Activated T-helper 1 cell treated with anti-CD3 and anti-CD28 coated beads, Interleukin-12 subunit alpha, Interleukin-12 subunit beta, Interleukin-2, Interleukin-4 antibody, amounts not matched to agents 30 ng/mL and 10 ng/mL and 1 ng/mL, durations not matched to agents 14 hours and 24 hours and 36 hours (primary cell): ENCODE measurements at regions of chr2 and their contacts with region 1.

Region 1: DNA sequence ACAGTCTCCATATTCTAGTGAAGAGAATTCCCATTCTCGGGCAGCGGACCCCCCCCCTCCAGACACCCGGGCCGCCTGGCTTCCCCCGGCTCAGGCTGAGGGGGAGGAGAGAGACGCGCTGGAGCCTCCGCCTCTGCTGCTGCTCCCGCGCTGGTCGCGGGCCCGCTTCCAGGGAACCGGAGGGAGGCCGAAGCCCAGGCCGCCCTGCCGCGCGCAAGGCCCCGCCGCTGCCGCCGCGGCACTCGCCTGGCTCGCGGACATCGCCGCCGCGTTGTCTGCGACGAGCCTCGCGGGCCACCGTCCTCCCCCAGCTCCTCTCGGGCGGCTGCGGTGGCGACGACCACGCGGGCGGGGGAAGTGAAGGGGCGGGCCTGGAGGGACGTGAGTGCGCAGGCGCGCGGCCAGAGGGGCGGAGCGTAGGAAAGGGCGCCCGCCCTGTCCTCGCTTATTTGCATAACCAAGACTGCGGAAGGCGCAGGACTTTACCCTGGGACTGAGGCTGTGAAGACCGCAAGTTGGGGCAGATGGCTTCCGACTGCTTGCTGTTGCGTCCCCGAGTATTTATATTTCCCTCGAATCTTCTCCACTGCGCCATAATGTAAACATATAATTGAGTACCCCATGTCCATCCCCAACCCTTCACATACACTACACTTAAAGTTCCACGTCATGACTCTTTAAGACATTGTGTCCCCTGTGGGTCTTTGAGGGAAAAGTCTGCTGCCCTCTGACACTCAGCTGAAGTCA is at the start of gene ARL5A:
- DNase-seq: peak; percentile 93
- H3K4me3 Mint-ChIP-seq: peak within 1 kb of the TSS; percentile 96
- H3K27ac Mint-ChIP-seq: peak within 1 kb of the TSS; percentile 90
- H3K4me1 Mint-ChIP-seq: peaks cover 40% of the 10 kb centered on the region
- H3K27me3 Mint-ChIP-seq: no peaks in the 10 kb centered on the region
- total RNA-seq, gene ARL5A: 60.1 and 69.3 TPM in 2 replicates

Region 2: GRCh38 chr2:151261231-151261976 is 566.9 kb before region 1 on chr2 and contains the start of gene RBM43:
- intact Hi-C with region 1: loop called (anchors 10 kb)
- DNase-seq: peak; percentile 85
- H3K4me3 Mint-ChIP-seq: peak within 1 kb of the TSS; percentile 93
- H3K27ac Mint-ChIP-seq: peak within 1 kb of the TSS; percentile 98
- H3K4me1 Mint-ChIP-seq: peaks cover 18% of the 10 kb centered on the region
- H3K27me3 Mint-ChIP-seq: peaks cover 2% of the 10 kb centered on the region
- total RNA-seq, gene RBM43: 1.9 and 2.9 TPM in 2 replicates

Region 3: DNA sequence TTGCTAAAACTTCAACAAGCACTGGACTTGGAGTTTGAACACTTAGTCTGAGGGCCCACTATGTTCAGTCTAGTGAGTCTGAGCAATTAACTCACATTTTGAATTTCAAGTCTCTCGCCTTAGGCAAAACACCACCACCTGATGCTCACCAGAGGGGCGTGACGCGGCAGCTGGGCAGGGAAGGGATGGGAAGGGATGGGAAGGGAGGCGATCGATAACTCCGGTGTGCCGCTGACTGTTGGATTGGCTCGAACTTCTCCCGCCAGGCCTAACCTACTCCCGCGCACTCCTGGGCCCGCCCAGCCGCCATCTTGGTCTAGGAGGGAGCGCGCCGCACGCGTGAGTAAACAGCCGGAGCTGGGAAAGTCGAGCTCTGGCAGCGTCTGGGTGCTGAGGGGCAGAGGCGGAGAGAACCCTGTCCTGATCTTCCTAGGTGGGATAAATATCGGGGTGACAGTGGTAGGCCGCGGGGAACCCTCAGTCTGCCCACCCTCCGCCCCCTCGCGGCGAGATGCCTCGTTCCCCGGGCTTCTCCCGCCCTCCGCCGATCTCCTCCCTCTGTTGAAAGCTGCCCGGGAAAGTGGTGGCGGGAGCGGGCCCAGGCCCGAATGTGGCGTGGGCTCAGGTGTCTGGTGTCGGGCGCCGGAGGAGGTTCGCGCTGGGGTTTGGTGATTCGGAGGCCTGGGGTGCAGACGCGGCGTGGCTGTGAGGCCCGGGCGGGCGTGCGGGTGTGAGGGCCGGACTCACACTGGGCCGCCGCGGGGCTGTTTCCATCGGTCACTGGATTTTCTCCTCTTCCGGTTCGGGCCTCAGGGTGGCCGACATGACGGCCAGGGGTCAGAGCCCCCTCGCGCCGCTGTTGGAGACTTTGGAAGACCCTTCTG is 418.5 kb before region 1 on chr2 and contains the start of gene RIF1:
- intact Hi-C with region 1: loop called (anchors 10 kb)
- DNase-seq: peak; percentile 68
- H3K4me3 Mint-ChIP-seq: peak within 1 kb of the TSS; percentile 95
- H3K27ac Mint-ChIP-seq: peak within 1 kb of the TSS; percentile 92
- H3K4me1 Mint-ChIP-seq: peaks cover 20% of the 10 kb centered on the region
- H3K27me3 Mint-ChIP-seq: peaks cover 3% of the 10 kb centered on the region
- total RNA-seq, gene RIF1: 82.4 and 82.7 TPM in 2 replicates

Region 4: GRCh38 chr2:151619337-151619989 is 208.9 kb before region 1 on chr2:
- intact Hi-C with region 1: loop called (anchors 2 kb)
- DNase-seq: no peak
- H3K4me3 Mint-ChIP-seq: no peak overlapping the region
- H3K27ac Mint-ChIP-seq: no peak overlapping the region
- H3K4me1 Mint-ChIP-seq: peaks cover 12% of the 10 kb centered on the region
- H3K27me3 Mint-ChIP-seq: peaks cover 5% of the 10 kb centered on the region

Region 5: GRCh38 chr2:151730262-151730975 is 97.9 kb before region 1 on chr2:
- intact Hi-C with region 1: no loop called
- DNase-seq: no peak
- H3K4me3 Mint-ChIP-seq: no peak overlapping the region
- H3K27ac Mint-ChIP-seq: no peak overlapping the region
- H3K4me1 Mint-ChIP-seq: no peaks in the 10 kb centered on the region
- H3K27me3 Mint-ChIP-seq: peaks cover 10% of the 10 kb centered on the region

Region 6: GRCh38 chr2:152097801-152098495 is 269.6 kb after region 1 on chr2:
- intact Hi-C with region 1: loop called (anchors 5 kb)
- DNase-seq: no peak
- H3K4me3 Mint-ChIP-seq: peak overlapping the region; percentile 61
- H3K27ac Mint-ChIP-seq: no peak overlapping the region
- H3K4me1 Mint-ChIP-seq: peaks cover 18% of the 10 kb centered on the region
- H3K27me3 Mint-ChIP-seq: peaks cover 64% of the 10 kb centered on the region

Region 7: GRCh38 chr2:152407204-152407721 is 578.9 kb after region 1 on chr2:
- intact Hi-C with region 1: loop called (anchors 10 kb)
- DNase-seq: peak; percentile 27
- H3K4me3 Mint-ChIP-seq: peak overlapping the region; percentile 73
- H3K27ac Mint-ChIP-seq: peak overlapping the region; percentile 67
- H3K4me1 Mint-ChIP-seq: peaks cover 57% of the 10 kb centered on the region
- H3K27me3 Mint-ChIP-seq: no peaks in the 10 kb centered on the region

Region 8: DNA sequence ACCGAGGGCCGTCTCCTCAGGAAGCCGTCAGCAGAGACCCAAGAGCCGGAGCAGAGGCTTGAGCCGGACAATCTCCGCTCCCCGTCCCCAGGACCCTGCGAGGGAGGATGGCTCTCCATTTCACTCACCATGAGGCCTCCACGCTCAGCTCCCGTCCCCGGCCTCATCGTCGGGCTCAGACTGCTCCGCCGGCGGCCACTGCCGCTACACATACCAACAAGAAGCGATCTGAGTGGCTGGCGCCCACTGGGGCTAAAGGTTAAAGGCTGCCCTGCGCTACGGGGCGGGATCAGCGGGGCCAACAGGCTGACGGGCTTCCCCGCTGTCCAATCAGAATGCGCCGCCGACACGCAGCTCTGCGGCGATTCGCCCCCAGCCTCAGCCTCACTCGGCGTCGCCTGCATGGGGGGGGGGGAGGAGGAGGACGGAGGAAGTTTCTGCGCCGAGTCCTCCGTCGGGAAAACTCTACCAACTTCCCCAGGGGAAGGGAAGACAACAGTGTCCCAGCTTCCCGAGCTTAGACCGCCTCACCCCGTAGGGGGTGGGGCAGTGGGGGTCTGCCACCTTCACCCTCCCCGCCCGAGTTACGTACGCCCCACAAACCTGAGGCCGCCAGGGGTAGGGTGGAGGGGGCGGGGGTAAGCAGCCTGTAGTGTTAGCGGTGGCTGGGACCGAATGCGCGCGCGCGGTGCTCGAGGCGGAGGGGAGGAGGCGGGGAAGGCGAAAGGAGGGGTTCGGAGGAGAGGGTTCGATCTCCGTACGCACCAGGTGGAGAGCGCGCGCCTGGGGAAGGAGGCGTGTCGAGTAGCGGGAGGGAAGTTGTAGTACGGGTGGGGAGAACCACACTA is 889.1 kb after region 1 on chr2 and contains the start of gene PRPF40A:
- intact Hi-C with region 1: loop called (anchors 1 kb)
- DNase-seq: peak; percentile 98
- H3K4me3 Mint-ChIP-seq: peak within 1 kb of the TSS; percentile 100
- H3K27ac Mint-ChIP-seq: peak within 1 kb of the TSS; percentile 97
- H3K4me1 Mint-ChIP-seq: peaks cover 56% of the 10 kb centered on the region
- H3K27me3 Mint-ChIP-seq: peaks cover 1% of the 10 kb centered on the region
- total RNA-seq, gene PRPF40A: 152 and 172 TPM in 2 replicates